ENCODE measurements at regions of chr5 and their contacts with region 1.

Region 1: GRCh38 chr5:100777680-100778281 is 125.3 kb downstream of the ST8SIA4 start:
- DNase-seq: no peak
- H3K4me3 ChIP-seq: no peak overlapping the region
- H3K4me3 Mint-ChIP-seq: peak overlapping the region in 3 of 8 donors; percentile 7 to 26 (median 9)
- H3K27ac ChIP-seq: no peak overlapping the region
- H3K27ac Mint-ChIP-seq: peak overlapping the region in 2 of 7 donors; percentile 4 to 52
- H3K4me1 ChIP-seq: peaks cover 30% of the 10 kb centered on the region
- H3K4me1 Mint-ChIP-seq: peaks cover 22 to 32% (median 27%) of the 10 kb centered on the region in 4 donors
- H3K27me3 ChIP-seq: no peaks in the 10 kb centered on the region
- H3K27me3 Mint-ChIP-seq: no peaks in the 10 kb centered on the region

Region 2: DNA sequence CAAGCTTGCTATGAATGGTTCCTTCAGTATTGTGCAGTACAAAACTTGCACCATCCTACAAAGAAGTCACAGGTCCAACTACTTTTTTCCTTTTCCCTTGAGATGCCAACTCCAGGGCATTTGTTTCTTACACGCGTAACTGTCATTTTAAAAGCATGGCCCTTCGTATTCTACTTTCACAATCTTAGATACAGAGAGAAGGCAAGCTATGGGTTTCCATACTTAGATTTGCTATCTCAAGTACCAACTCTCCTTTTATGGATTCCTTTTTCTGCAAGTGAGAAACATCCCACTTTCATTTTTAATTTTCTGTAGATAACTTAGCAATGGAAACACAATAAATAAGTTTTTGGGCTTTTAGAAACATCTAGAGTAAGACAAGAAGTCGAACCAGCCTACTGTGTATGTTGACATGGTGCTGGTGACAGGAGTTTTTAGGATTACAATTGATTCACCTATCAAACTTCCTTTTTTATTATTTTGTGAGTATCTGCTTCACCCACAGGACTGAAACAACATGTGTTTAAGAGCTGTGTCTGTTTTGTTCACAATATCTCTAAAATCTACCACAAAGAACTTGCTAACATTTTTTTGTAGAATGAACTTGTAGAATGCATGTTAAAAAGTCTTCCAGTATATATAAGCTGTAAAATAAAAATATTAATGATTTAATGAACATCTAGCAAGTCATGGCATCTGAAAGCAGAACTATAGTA is 118.5 kb before region 1 on chr5:
- CTCF ChIA-PET with region 1: no interaction called
- POLR2A ChIA-PET with region 1: no interaction called
- intact Hi-C with region 1: no loop called
- DNase-seq: no peak
- H3K4me3 ChIP-seq: no peak overlapping the region
- H3K4me3 Mint-ChIP-seq: peak overlapping the region in 2 of 8 donors; percentile 13 to 40
- H3K27ac ChIP-seq: no peak overlapping the region
- H3K27ac Mint-ChIP-seq: peak overlapping the region in 1 of 7 donors; percentile 64
- H3K4me1 ChIP-seq: peaks cover 8% of the 10 kb centered on the region
- H3K4me1 Mint-ChIP-seq: peaks cover 0 to 17% (median 9%) of the 10 kb centered on the region in 4 donors
- H3K27me3 ChIP-seq: no peaks in the 10 kb centered on the region
- H3K27me3 Mint-ChIP-seq: peaks cover 0 to 2% of the 10 kb centered on the region in 2 donors

Region 3: GRCh38 chr5:100731768-100732167 is 46.0 kb before region 1 on chr5:
- CTCF ChIA-PET with region 1: no interaction called
- POLR2A ChIA-PET with region 1: no interaction called
- intact Hi-C with region 1: loop called (anchors 5 kb)
- DNase-seq: peak; percentile 38 to 66 (median 52)
- H3K4me3 ChIP-seq: peak overlapping the region in 1 of 2 donors; percentile 2
- H3K4me3 Mint-ChIP-seq: peak overlapping the region; percentile 76 to 91 (median 81)
- H3K27ac ChIP-seq: peak overlapping the region; percentile 7
- H3K27ac Mint-ChIP-seq: peak overlapping the region; percentile 70 to 93 (median 89)
- H3K4me1 ChIP-seq: peaks cover 13% of the 10 kb centered on the region
- H3K4me1 Mint-ChIP-seq: peaks cover 5 to 10% (median 8%) of the 10 kb centered on the region in 4 donors
- H3K27me3 ChIP-seq: no peaks in the 10 kb centered on the region
- H3K27me3 Mint-ChIP-seq: no peaks in the 10 kb centered on the region

Region 4: DNA sequence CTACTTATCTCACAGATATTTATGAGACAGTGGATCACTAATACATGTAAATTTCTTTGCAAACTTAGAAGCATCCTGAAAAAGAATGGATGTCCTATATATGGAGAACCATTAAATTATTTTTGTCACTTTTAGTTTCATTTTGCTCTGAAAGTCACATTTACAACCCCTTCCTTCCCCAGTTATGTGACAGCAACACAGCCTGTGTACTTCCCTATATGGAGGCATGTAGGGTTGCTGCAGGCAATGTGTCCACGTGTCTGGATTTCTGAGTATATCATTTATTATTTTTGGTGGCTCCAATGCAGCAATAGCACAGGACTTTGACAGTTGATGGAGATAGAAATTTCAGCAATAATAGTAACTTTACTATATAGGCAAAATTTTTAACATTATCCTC is 31.1 kb before region 1 on chr5:
- CTCF ChIA-PET with region 1: no interaction called
- POLR2A ChIA-PET with region 1: no interaction called
- intact Hi-C with region 1: no loop called
- DNase-seq: no peak
- H3K4me3 ChIP-seq: no peak overlapping the region
- H3K4me3 Mint-ChIP-seq: peak overlapping the region in 6 of 8 donors; percentile 3 to 64 (median 47)
- H3K27ac ChIP-seq: no peak overlapping the region
- H3K27ac Mint-ChIP-seq: peak overlapping the region in 2 of 7 donors; percentile 9 to 54
- H3K4me1 ChIP-seq: no peaks in the 10 kb centered on the region
- H3K4me1 Mint-ChIP-seq: peaks cover 6 to 8% (median 7%) of the 10 kb centered on the region in 4 donors
- H3K27me3 ChIP-seq: no peaks in the 10 kb centered on the region
- H3K27me3 Mint-ChIP-seq: peaks cover 2 to 4% of the 10 kb centered on the region in 2 donors